Endothelial cell of umbilical vein (primary cell): ENCODE measurements at regions of chr12 and their contacts with region 1.

Region 1: DNA sequence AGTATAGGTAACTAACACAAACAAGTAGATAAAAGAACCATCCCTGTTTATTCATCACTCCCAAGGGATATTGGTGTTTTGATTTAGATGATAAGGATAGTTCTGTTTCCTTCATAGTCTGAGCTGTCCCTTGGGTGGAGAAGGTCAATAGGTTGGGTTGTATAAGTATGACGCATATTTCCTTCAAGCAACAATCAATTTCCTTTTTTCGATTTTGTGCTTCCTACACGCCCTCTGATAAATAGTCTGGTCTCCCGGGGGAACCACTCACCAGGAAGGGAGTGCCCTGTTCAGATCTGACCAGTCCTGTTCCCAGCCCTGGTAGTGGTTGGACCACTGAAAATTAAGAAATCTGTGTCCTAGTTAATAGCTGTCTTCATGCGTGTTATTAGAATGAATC is 378.7 kb upstream of the FAR2 start:
- DNase-seq: peak; percentile 94
- H3K4me3 ChIP-seq: no peak overlapping the region
- H3K27ac ChIP-seq: peak overlapping the region; percentile 77
- H3K4me1 ChIP-seq: peaks cover 27% of the 10 kb centered on the region
- H3K27me3 ChIP-seq: no peaks in the 10 kb centered on the region
- CTCF ChIP-seq: no peak
- POLR2A ChIP-seq: peak; percentile 58

Region 2: GRCh38 chr12:28190321-28191050 is 579.8 kb before region 1 on chr12 and contains the start of gene CCDC91:
- CTCF ChIA-PET with region 1: no interaction called
- POLR2A ChIA-PET with region 1: no interaction called
- dilution Hi-C with region 1: no loop called
- intact Hi-C with region 1: loop called (anchors 5 kb)
- DNase-seq: peak; percentile 77
- H3K4me3 ChIP-seq: peak within 1 kb of the TSS; percentile 37 to 89 (median 67)
- H3K27ac ChIP-seq: peak within 1 kb of the TSS; percentile 76
- H3K4me1 ChIP-seq: peaks cover 12% of the 10 kb centered on the region
- H3K27me3 ChIP-seq: no peaks in the 10 kb centered on the region
- CTCF ChIP-seq: peak in 1 of 2 donors; percentile 5
- POLR2A ChIP-seq: peak; percentile 41
- total RNA-seq, gene CCDC91: 9.9 and 10.5 TPM in 2 replicates

Region 3: DNA sequence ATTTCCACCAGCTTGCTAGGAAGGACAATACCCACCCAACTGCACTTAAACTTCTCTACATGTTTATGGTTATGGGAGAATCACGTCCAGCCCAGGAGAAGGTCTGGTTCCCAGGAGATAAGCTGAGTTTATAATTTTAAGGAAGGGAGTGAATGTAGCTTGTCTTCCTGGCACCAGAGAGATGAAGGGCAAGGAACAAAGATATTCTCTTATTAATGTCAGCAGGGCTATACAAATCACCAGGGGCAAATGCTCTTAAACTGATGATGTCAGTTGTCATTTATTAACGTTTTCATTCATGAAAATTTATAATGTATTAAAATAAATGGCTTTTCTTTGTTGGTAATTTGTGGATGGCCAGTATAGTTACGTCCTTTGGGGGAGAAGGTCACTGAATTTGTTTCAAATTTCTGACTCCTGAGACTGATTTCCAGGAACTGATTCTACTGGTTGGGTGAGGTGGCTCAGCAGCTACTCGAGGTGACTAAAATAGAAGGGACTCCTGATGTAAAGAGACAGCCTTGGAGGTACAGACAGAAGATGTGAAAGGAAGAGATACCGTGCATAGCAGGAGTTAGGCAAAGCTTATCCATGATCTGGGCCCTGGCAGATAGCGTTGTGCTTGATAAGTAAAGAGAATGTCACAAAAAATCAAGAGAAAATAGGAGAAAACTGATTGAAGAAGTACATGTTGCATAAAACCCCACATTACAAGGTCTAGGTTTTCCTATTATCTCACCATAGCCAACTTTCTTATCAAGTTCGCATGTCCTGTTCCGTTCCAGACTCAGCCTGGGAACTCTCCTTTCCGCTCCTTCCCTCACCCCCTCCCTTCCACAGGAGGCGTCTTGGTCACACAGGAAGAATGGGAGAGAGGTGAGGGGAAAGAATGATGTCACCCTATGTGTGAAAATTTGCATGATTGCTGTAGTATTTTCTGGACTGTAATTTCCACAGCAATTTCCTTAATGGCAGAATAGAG is 11.6 kb after region 1 on chr12:
- CTCF ChIA-PET with region 1: interaction called, 4 read pairs
- POLR2A ChIA-PET with region 1: no interaction called
- dilution Hi-C with region 1: no loop called
- intact Hi-C with region 1: loop called (anchors 1 kb)
- DNase-seq: peak; percentile 89
- H3K4me3 ChIP-seq: no peak overlapping the region
- H3K27ac ChIP-seq: peak overlapping the region; percentile 33
- H3K4me1 ChIP-seq: peaks cover 16% of the 10 kb centered on the region
- H3K27me3 ChIP-seq: no peaks in the 10 kb centered on the region
- CTCF ChIP-seq: no peak
- POLR2A ChIP-seq: no peak

Region 4: GRCh38 chr12:28855761-28856310 is 85.5 kb after region 1 on chr12:
- CTCF ChIA-PET with region 1: no interaction called
- POLR2A ChIA-PET with region 1: no interaction called
- dilution Hi-C with region 1: no loop called
- intact Hi-C with region 1: no loop called
- DNase-seq: no peak
- H3K4me3 ChIP-seq: no peak overlapping the region
- H3K27ac ChIP-seq: no peak overlapping the region
- H3K4me1 ChIP-seq: no peaks in the 10 kb centered on the region
- H3K27me3 ChIP-seq: no peaks in the 10 kb centered on the region
- CTCF ChIP-seq: no peak
- POLR2A ChIP-seq: no peak